CD4-positive, alpha-beta memory T cell (primary cell): ENCODE measurements at regions of chr15 and their contacts with region 1.

Region 1: GRCh38 chr15:38707802-38708671 is 143.4 kb upstream of the RASGRP1 start:
- DNase-seq: peak; percentile 37 to 56 (median 53)
- H3K4me3 ChIP-seq: no peak overlapping the region
- H3K4me3 Mint-ChIP-seq: peak overlapping the region in 2 of 8 donors; percentile 24 to 38
- H3K27ac ChIP-seq: no peak overlapping the region
- H3K27ac Mint-ChIP-seq: no peak overlapping the region
- H3K4me1 ChIP-seq: peaks cover 9% of the 10 kb centered on the region
- H3K4me1 Mint-ChIP-seq: peaks cover 0 to 3% (median 0%) of the 10 kb centered on the region in 4 donors
- H3K27me3 ChIP-seq: no peaks in the 10 kb centered on the region
- H3K27me3 Mint-ChIP-seq: peaks cover 0 to 2% of the 10 kb centered on the region in 2 donors

Region 2: GRCh38 chr15:38474155-38474757 is 233.8 kb before region 1 on chr15:
- CTCF ChIA-PET with region 1: interaction called, 12 read pairs
- POLR2A ChIA-PET with region 1: no interaction called
- intact Hi-C with region 1: no loop called
- DNase-seq: peak; percentile 57 to 73 (median 69)
- H3K4me3 ChIP-seq: no peak overlapping the region
- H3K4me3 Mint-ChIP-seq: peak overlapping the region in 1 of 8 donors; percentile 2
- H3K27ac ChIP-seq: peak overlapping the region; percentile 25
- H3K27ac Mint-ChIP-seq: peak overlapping the region; percentile 59 to 86 (median 81)
- H3K4me1 ChIP-seq: peaks cover 5% of the 10 kb centered on the region
- H3K4me1 Mint-ChIP-seq: peaks cover 8 to 9% (median 8%) of the 10 kb centered on the region in 4 donors
- H3K27me3 ChIP-seq: no peaks in the 10 kb centered on the region
- H3K27me3 Mint-ChIP-seq: no peaks in the 10 kb centered on the region

Region 3: GRCh38 chr15:38724827-38725226 is 16.8 kb after region 1 on chr15:
- CTCF ChIA-PET with region 1: interaction called, 12 read pairs
- POLR2A ChIA-PET with region 1: no interaction called
- intact Hi-C with region 1: no loop called
- DNase-seq: no peak
- H3K4me3 ChIP-seq: no peak overlapping the region
- H3K4me3 Mint-ChIP-seq: no peak overlapping the region
- H3K27ac ChIP-seq: no peak overlapping the region
- H3K27ac Mint-ChIP-seq: no peak overlapping the region
- H3K4me1 ChIP-seq: no peaks in the 10 kb centered on the region
- H3K4me1 Mint-ChIP-seq: peaks cover 0 to 3% (median 0%) of the 10 kb centered on the region in 4 donors
- H3K27me3 ChIP-seq: no peaks in the 10 kb centered on the region
- H3K27me3 Mint-ChIP-seq: peaks cover 0 to 1% of the 10 kb centered on the region in 2 donors

Region 4: DNA sequence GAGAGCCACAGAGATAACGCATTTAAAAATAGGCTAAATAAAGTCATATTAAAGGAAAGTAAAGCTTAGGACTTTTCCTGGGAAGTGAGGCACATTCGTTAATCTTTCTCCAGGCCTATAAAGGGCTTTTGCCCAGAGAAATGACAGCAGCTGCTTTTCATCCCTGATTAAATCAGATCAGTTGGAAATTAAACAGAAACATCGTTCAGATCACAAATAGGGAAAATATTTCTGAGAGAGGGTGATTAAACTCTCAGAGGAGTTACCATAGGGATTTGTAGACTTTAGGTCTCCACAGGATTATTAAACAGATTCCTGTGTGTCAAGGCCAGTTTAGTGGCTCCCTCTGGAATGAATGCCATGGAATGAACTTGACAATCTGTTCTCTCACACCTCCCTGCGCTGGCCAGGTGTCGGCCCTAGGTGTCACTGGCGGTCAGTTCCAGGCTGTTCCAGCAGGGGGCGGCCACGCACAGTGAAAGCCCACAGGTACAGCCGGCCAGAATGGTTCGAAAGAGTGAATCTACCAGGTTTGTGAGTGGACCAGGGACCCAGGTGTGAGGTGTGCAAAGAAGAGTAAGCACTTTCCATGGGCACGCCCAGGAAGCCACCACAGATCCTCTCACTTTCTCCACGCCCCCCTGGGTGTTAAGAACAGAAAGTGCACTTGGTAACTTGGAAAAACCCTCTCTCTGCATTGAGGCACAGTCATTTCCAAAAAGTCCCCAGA is 109.6 kb after region 1 on chr15:
- CTCF ChIA-PET with region 1: no interaction called
- POLR2A ChIA-PET with region 1: no interaction called
- intact Hi-C with region 1: loop called (anchors 5 kb)
- DNase-seq: peak; percentile 69 to 78 (median 73)
- H3K4me3 ChIP-seq: no peak overlapping the region
- H3K4me3 Mint-ChIP-seq: peak overlapping the region in 4 of 8 donors; percentile 17 to 52 (median 20)
- H3K27ac ChIP-seq: no peak overlapping the region
- H3K27ac Mint-ChIP-seq: no peak overlapping the region
- H3K4me1 ChIP-seq: no peaks in the 10 kb centered on the region
- H3K4me1 Mint-ChIP-seq: peaks cover 0 to 5% (median 2%) of the 10 kb centered on the region in 4 donors
- H3K27me3 ChIP-seq: no peaks in the 10 kb centered on the region
- H3K27me3 Mint-ChIP-seq: peaks cover 0 to 2% of the 10 kb centered on the region in 2 donors

Region 5: DNA sequence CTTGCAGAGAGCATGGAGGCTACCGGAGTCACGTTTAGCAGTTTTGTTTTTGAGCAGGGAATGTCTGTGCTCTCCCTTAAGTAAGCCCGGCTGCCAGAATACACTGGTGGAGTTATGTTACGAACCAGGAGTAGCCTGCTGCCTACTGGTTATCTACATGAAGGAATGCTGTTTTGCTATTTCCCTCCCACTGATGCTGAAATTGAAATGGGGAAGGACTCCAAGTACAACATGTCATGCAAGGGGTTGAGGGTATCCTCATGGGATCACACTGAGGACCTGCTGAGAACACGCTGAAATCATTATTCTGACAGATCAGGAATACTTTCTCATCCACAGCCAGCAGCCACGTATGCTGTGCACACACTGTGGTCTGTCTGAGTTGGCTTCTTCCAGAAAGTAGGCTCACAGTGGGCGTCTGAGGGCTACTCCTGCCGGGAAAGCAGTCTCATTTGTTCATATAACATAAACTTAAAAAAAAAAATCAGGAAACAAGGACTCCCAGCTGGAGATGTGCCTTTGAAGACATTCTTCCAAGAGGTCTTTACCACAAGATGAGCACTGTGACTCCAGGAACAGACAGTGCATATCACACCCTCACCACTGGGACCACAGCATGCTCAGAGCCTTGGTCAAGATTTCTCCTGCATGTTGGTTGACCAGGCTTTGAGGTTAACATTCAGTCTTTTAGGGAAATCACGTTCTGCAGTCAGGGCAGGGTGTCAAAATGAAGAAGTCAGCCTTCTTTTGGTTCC is 157.0 kb after region 1 on chr15:
- CTCF ChIA-PET with region 1: no interaction called
- POLR2A ChIA-PET with region 1: no interaction called
- intact Hi-C with region 1: loop called (anchors 5 kb)
- DNase-seq: no peak
- H3K4me3 ChIP-seq: no peak overlapping the region
- H3K4me3 Mint-ChIP-seq: no peak overlapping the region
- H3K27ac ChIP-seq: no peak overlapping the region
- H3K27ac Mint-ChIP-seq: no peak overlapping the region
- H3K4me1 ChIP-seq: no peaks in the 10 kb centered on the region
- H3K4me1 Mint-ChIP-seq: no peaks in the 10 kb centered on the region
- H3K27me3 ChIP-seq: no peaks in the 10 kb centered on the region
- H3K27me3 Mint-ChIP-seq: peaks cover 4 to 11% of the 10 kb centered on the region in 2 donors

Region 6: GRCh38 chr15:39580117-39580484 is 872.1 kb after region 1 on chr15:
- CTCF ChIA-PET with region 1: interaction called, 11 read pairs
- POLR2A ChIA-PET with region 1: no interaction called
- intact Hi-C with region 1: loop called (anchors 2 kb)
- DNase-seq: peak; percentile 76 to 84 (median 84)
- H3K4me3 ChIP-seq: peak overlapping the region in 1 of 2 donors; percentile 56
- H3K4me3 Mint-ChIP-seq: peak overlapping the region; percentile 63 to 90 (median 75)
- H3K27ac ChIP-seq: no peak overlapping the region
- H3K27ac Mint-ChIP-seq: peak overlapping the region in 2 of 7 donors; percentile 35 to 69
- H3K4me1 ChIP-seq: peaks cover 14% of the 10 kb centered on the region
- H3K4me1 Mint-ChIP-seq: peaks cover 9 to 53% (median 19%) of the 10 kb centered on the region in 4 donors
- H3K27me3 ChIP-seq: peaks cover 2% of the 10 kb centered on the region
- H3K27me3 Mint-ChIP-seq: peaks cover 15 to 32% of the 10 kb centered on the region in 2 donors